ENCODE measurements at regions of chr3 and their contacts with region 1.

Region 1: DNA sequence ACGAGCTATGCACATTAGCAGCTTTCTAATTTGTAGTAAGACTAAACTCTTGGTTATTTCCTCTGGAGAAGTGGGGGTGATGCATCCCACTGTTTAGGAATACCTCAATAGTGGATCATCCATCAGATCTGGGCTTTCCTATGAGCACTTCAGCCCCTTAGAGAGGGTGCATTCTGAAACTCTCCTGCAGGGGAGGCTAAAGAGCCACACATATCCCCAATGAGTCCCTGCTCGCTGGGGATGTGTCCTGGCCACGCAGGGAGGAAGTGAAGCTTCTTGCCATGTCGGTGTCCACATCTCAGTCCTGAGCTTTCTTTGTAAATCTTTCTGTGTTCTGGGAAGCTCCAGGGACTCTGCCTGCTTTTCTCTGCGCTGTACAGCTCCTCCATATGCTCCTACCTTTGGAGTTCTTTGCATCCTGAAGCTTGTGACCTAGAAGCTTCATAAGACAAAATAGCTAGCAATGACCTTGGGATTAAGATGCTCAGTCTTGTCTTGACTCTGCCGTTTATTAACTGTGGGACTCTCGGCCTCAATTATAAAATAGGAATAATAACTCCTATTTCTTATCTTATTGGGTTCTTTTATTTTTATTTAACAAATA is 28.3 kb upstream of the MASP1 start:
- DNase-seq: peak; percentile 66
- H3K4me3 ChIP-seq: no peak overlapping the region
- CTCF ChIP-seq: peak; percentile 99

Region 2: DNA sequence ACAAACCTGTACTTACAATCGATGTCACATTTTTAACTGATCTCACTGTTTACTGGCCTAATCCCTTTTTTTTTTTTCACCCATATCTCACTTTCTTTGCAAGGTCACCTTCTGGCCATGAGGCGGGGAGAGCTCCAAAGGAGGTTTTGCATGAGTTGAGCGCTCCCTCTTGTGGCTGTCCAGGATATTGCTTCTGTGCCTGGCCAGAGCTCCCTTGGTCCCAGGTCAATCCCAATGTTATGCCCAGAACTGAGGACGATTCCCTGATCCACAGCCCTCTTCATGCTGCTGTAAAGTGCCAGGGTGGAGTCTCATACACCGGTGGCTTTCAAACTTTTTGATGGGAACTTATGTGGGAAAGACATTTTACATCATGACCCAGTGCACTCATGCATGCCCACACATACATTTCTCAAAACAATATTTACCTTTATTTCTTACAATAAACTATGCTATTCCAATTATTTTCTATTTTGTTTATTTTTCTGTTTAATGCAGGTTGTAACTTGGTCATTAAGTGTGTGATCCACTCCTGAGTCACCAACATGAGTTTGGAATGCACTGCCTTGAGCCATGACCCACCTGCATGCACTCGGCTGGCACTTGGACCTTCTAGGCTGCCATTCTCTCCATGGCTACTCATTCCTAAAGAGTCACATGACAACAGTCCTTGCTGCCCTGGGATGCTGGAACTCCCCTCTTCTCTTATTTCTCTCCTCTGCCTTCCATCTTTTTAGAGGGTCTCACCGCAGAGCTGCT is 360.0 kb after region 1 on chr3:
- in situ Hi-C with region 1: loop called (anchors 10 kb)
- DNase-seq: no peak
- H3K4me3 ChIP-seq: no peak overlapping the region
- CTCF ChIP-seq: peak; percentile 98